Left cardiac atrium (tissue), 4 donors: ENCODE measurements at regions of chr2 and their contacts with region 1.

Region 1: GRCh38 chr2:39156107-39156506 is 35.3 kb upstream of the SOS1 start:
- DNase-seq: no peak
- ATAC-seq: peak; percentile 72 to 76

Region 2: DNA sequence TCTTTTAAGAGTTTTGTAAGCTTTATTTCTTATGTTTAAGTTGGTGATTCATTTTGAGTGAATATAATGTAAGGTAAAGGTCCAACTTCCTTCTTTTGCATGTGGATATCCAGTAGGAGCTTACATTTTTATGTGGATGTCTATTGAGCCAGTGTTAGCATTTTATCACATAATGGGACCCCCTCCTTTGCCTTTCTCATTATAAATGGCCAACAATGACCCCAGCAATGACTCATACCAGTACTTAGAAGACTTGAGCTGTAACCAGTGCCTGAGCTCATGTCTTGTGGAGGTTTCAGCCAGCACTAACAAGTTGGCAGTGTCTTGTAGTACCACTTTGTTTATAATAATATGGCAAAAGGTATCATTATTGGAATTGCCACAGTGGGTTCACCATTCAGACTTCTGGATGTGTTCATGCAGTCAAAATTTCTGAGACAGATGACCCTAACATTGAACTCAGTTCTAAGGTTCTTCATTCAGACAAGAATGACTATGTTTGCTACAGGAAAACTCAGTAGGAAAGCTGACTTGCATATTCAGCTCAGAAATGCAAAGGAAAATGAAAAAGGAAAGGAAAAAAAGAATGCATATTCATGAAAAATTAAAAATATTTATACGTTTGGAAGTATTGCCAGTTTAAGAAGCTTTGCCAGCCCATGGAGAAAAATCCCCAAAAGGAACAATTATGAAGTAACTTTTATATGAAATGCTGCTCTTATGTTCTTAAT is 46.7 kb after region 1 on chr2:
- intact Hi-C with region 1: loop called in 1 of 2 experiments (anchors 10 kb)
- DNase-seq: no peak
- ATAC-seq: no peak